Activated naive CD4-positive, alpha-beta T cell treated with anti-CD3 and anti-CD28 coated beads for 36 hours (primary cell): ENCODE measurements at regions of chr14 and their contacts with region 1.

Region 1: DNA sequence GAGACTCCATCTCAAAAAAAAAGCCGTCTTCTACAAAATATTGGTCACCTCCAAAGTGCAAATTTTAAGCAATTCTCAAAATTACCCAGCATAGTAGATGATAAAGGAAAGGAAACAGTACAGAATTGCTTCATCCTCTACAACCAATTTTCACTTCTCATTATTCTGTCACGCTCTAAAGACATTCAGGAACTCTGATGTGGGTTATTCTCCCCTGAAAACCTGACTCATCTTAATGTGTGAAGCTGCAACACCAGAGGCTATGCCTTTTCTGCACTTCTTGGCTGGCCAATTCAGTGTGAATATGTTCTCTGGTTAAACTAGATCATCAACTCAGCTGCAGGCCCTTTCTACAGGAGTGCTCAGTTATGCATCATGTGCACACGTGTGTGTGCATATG is 11.0 kb downstream of the PTGER2 start:
- DNase-seq: peak; percentile 52
- H3K4me3 Mint-ChIP-seq: no peak overlapping the region
- H3K27ac Mint-ChIP-seq: peak overlapping the region; percentile 7
- H3K4me1 Mint-ChIP-seq: peaks cover 47% of the 10 kb centered on the region
- H3K27me3 Mint-ChIP-seq: no peaks in the 10 kb centered on the region

Region 2: GRCh38 chr14:51908086-51908485 is 417.0 kb before region 1 on chr14:
- CTCF ChIA-PET with region 1: no interaction called
- intact Hi-C with region 1: loop called (anchors 5 kb)
- DNase-seq: no peak
- H3K4me3 Mint-ChIP-seq: no peak overlapping the region
- H3K27ac Mint-ChIP-seq: no peak overlapping the region
- H3K4me1 Mint-ChIP-seq: peaks cover 67% of the 10 kb centered on the region
- H3K27me3 Mint-ChIP-seq: no peaks in the 10 kb centered on the region

Region 3: GRCh38 chr14:52286661-52287649 is 38.2 kb before region 1 on chr14:
- CTCF ChIA-PET with region 1: no interaction called
- intact Hi-C with region 1: no loop called
- DNase-seq: no peak
- H3K4me3 Mint-ChIP-seq: no peak overlapping the region
- H3K27ac Mint-ChIP-seq: no peak overlapping the region
- H3K4me1 Mint-ChIP-seq: peaks cover 24% of the 10 kb centered on the region
- H3K27me3 Mint-ChIP-seq: no peaks in the 10 kb centered on the region

Region 4: GRCh38 chr14:52351233-52352060 is 26.3 kb after region 1 on chr14:
- CTCF ChIA-PET with region 1: no interaction called
- intact Hi-C with region 1: loop called (anchors 1 kb)
- DNase-seq: no peak
- H3K4me3 Mint-ChIP-seq: no peak overlapping the region
- H3K27ac Mint-ChIP-seq: peak overlapping the region; percentile 43
- H3K4me1 Mint-ChIP-seq: peaks cover 52% of the 10 kb centered on the region
- H3K27me3 Mint-ChIP-seq: no peaks in the 10 kb centered on the region

Region 5: GRCh38 chr14:52391881-52392615 is 66.9 kb after region 1 on chr14:
- CTCF ChIA-PET with region 1: no interaction called
- intact Hi-C with region 1: no loop called
- DNase-seq: no peak
- H3K4me3 Mint-ChIP-seq: no peak overlapping the region
- H3K27ac Mint-ChIP-seq: no peak overlapping the region
- H3K4me1 Mint-ChIP-seq: no peaks in the 10 kb centered on the region
- H3K27me3 Mint-ChIP-seq: no peaks in the 10 kb centered on the region

Region 6: DNA sequence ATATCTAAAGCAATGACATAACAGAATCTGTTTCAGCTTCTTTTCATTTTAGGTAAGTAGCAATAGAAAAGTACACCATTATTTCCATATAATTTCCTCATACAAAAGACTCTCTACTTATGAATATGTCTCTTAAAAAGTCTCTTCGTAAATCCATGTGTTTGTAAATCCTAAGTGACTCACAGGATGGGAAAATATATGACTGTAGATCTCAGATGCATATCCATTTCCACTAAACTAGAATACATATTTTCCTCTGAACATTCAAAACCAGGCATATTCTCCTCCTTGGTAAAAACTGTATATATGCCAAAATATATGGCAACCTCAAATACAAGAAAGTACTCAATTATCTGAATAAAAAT is 133.6 kb after region 1 on chr14:
- CTCF ChIA-PET with region 1: no interaction called
- intact Hi-C with region 1: loop called (anchors 2 kb)
- DNase-seq: no peak
- H3K4me3 Mint-ChIP-seq: no peak overlapping the region
- H3K27ac Mint-ChIP-seq: no peak overlapping the region
- H3K4me1 Mint-ChIP-seq: peaks cover 6% of the 10 kb centered on the region
- H3K27me3 Mint-ChIP-seq: no peaks in the 10 kb centered on the region

Region 7: GRCh38 chr14:53190938-53191337 is 865.8 kb after region 1 on chr14:
- CTCF ChIA-PET with region 1: no interaction called
- intact Hi-C with region 1: loop called (anchors 5 kb)
- DNase-seq: peak; percentile 72
- H3K4me3 Mint-ChIP-seq: peak overlapping the region; percentile 41
- H3K27ac Mint-ChIP-seq: peak overlapping the region; percentile 22
- H3K4me1 Mint-ChIP-seq: peaks cover 12% of the 10 kb centered on the region
- H3K27me3 Mint-ChIP-seq: no peaks in the 10 kb centered on the region